Endothelial cell of umbilical vein (primary cell): ENCODE measurements at regions of chr5 and their contacts with region 1.

Region 1: DNA sequence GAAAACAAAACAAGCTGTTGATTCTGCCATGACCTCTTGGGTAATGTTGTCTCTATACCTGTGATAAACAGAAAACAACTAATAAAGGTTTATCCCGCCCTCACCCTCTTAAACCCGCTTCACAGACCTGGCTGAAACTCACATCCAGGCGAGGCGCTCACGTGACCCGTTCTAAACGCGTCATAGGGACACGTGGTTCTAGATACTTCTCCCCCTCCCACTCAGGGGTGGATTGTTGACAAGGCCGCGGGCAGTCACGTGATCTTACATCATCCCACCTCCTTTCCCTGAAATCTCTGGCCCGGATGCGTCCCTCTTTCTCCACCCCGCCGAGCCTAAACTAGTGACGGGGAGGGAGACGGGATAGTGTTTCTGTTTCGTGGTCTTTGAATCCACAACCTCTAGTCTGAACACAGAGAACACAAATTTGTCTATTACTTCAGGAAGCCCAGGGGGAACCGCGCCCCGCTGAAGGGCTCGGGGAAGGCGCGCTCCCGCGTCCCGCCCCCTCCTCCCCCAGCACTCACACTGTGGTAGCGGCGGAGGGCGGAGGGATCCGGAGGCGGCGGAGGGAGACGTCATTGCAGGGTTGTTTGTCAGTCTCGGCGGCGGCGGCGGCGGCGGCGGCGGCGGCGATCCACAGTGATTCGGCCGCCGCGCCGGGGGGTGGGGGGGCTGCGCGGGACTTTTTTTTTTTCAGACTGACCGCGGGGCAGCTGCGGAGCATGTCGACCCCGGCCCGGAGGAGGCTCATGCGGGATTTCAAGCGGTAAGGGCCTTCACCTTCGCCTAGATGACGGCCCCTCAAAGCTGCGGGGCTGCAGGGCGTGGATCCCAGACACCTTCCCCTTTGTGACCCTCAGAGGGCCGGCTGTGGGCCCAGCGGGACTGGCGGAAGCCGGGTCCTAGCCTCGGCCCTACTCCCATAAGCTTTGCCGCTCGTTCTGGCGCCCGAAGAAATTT is at the start of gene UBE2B:
- DNase-seq: peak; percentile 99
- H3K4me3 ChIP-seq: peak within 1 kb of the TSS; percentile 91 to 94 (median 93)
- H3K27ac ChIP-seq: peak within 1 kb of the TSS; percentile 97
- H3K4me1 ChIP-seq: peaks cover 11% of the 10 kb centered on the region
- H3K27me3 ChIP-seq: no peaks in the 10 kb centered on the region
- CTCF ChIP-seq: no peak
- POLR2A ChIP-seq: peak; percentile 90
- total RNA-seq, gene UBE2B: 109 and 110 TPM in 2 replicates

Region 2: DNA sequence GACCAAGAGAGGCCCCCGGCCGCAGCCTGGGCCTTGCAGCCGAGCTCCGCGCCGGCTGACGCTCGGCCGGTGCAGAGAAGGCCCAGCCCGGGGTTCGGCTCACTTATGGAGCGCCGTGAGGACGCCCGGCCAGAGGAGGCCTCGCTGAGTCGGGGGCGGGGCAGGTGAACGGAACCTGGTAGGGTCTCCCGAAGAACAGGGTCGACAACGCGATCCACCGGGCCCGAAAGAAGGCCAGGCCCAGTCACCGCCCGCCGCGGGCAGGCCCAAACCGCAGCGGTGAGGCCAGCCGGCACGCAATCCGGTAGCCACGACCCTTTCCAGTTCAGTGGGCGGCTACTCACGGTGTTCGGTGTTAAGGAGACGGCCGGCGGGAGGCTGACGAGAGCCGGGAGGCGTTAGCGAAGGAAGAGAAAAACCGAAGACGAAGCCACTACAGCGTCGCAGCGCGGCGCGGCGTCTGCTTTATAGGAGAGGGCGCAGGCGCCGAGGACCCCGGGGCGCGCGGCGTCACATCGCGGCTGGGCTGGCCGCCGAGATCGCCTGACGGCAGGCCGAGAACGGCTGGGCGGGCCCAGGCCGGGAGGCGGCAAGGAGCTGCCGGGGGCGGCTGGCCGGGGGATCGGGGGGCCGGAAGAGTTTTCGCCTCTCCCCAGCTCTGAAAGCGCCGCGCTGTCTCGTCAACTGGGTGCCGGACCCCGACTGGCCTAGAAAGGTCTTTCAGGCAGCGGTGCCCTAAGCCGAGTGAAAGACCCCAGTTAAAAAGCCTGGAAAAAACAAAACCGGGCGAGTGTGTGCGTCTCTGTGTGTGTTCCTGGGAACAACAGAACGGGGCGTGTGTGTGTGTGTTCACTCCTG is 194.4 kb before region 1 on chr5 and contains the start of gene SKP1:
- CTCF ChIA-PET with region 1: no interaction called
- POLR2A ChIA-PET with region 1: no interaction called
- dilution Hi-C with region 1: no loop called
- intact Hi-C with region 1: loop called (anchors 1 kb)
- DNase-seq: peak; percentile 86
- H3K4me3 ChIP-seq: peak within 1 kb of the TSS; percentile 91 to 99 (median 98)
- H3K27ac ChIP-seq: peak within 1 kb of the TSS; percentile 85
- H3K4me1 ChIP-seq: peaks cover 18% of the 10 kb centered on the region
- H3K27me3 ChIP-seq: no peaks in the 10 kb centered on the region
- CTCF ChIP-seq: no peak
- POLR2A ChIP-seq: peak; percentile 99
- total RNA-seq, gene SKP1: 311 and 320 TPM in 2 replicates

Region 3: DNA sequence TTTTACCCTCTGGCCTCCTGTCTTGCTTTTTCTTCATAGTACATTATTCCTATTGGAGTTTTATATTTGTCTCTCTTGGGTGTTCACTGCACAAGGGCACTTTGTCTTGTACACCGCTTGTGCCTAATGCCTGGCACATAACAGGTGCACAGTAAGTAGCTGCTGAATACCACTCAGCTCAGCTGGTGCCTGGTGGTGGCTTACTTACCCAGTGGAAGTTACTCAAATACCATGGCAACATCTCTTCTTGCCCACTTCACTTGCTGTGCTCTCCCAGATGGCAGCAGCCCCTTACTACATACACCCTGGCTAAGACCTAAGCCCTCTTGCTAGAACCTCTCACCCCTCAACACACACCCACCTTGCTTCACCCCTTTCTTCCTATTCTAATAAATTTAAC is 183.1 kb before region 1 on chr5:
- CTCF ChIA-PET with region 1: no interaction called
- POLR2A ChIA-PET with region 1: no interaction called
- dilution Hi-C with region 1: no loop called
- intact Hi-C with region 1: no loop called
- DNase-seq: no peak
- H3K4me3 ChIP-seq: no peak overlapping the region
- H3K27ac ChIP-seq: no peak overlapping the region
- H3K4me1 ChIP-seq: no peaks in the 10 kb centered on the region
- H3K27me3 ChIP-seq: no peaks in the 10 kb centered on the region
- CTCF ChIP-seq: no peak
- POLR2A ChIP-seq: no peak

Region 4: GRCh38 chr5:134304311-134304710 is 66.8 kb before region 1 on chr5:
- CTCF ChIA-PET with region 1: no interaction called
- POLR2A ChIA-PET with region 1: no interaction called
- dilution Hi-C with region 1: no loop called
- intact Hi-C with region 1: loop called (anchors 5 kb)
- DNase-seq: no peak
- H3K4me3 ChIP-seq: no peak overlapping the region
- H3K27ac ChIP-seq: no peak overlapping the region
- H3K4me1 ChIP-seq: no peaks in the 10 kb centered on the region
- H3K27me3 ChIP-seq: no peaks in the 10 kb centered on the region
- CTCF ChIP-seq: no peak
- POLR2A ChIP-seq: no peak

Region 5: DNA sequence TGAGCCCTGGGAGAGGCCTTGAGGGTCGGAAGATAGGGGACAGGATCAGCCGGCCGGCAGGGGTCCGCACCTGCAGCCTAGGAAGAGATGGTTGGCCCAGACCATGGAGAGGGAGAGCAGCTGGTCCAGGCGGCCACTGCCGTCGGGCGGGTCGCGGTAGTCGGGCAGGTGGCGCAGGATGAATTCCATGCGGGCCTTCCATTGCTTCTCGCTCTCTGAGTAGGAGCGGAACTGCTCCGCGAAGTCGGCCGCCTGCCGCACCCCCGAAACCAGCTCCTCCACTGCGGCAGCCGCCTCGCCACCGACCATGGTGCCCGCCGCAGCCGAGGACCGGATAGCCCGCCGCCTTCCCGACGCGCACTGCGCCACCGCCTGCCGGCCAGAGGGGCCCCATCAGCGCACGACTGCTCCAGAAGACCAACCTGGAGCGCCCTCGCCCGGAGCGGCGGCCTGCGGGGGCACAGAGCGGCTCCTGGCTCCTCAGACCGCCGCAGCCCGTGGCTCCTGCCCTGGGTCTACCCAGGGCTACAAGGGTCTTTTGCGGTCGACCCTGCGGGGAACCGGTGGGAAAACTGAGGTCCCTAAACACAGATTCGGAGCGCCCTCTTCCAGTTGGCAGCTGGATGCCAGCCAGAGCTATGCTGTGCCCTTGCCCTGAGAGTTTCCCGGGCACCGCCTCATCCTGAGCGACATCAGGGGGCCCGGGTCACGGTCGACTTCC is 40.6 kb after region 1 on chr5 and contains the start of gene CDKN2AIPNL:
- CTCF ChIA-PET with region 1: interaction called, 4 read pairs
- POLR2A ChIA-PET with region 1: no interaction called
- dilution Hi-C with region 1: no loop called
- intact Hi-C with region 1: loop called (anchors 1 kb)
- DNase-seq: peak; percentile 86
- H3K4me3 ChIP-seq: peak within 1 kb of the TSS; percentile 75 to 88 (median 84)
- H3K27ac ChIP-seq: peak within 1 kb of the TSS; percentile 40
- H3K4me1 ChIP-seq: peaks cover 15% of the 10 kb centered on the region
- H3K27me3 ChIP-seq: no peaks in the 10 kb centered on the region
- CTCF ChIP-seq: peak; percentile 71 to 86
- POLR2A ChIP-seq: peak; percentile 86
- total RNA-seq, gene CDKN2AIPNL: 35.1 and 36.5 TPM in 2 replicates

Region 6: DNA sequence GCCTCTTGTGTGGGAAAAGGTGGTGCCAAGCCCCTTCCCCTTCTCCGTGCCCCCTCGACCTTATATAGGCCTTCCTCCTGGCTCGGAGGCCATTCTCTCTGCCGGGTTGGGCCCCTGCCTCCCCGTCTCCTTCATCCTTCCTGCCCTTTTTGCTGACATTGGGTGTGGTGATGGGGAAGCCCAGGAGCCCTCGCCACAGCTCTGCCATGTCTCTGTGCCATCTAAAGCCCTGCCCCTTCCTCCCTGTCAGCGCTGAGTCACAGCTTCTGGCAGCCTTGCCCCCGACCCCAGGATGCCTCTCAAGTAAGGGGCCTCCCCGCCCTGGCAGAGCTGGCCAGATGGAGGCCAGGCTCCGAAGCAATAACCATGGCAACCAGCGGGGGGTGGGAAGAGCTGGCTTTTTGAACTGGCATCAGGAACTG is 184.7 kb after region 1 on chr5:
- CTCF ChIA-PET with region 1: no interaction called
- POLR2A ChIA-PET with region 1: no interaction called
- dilution Hi-C with region 1: no loop called
- intact Hi-C with region 1: loop called (anchors 1 kb)
- DNase-seq: peak; percentile 91
- H3K4me3 ChIP-seq: no peak overlapping the region
- H3K27ac ChIP-seq: peak overlapping the region; percentile 88
- H3K4me1 ChIP-seq: peaks cover 56% of the 10 kb centered on the region
- H3K27me3 ChIP-seq: no peaks in the 10 kb centered on the region
- CTCF ChIP-seq: no peak
- POLR2A ChIP-seq: no peak

Region 7: DNA sequence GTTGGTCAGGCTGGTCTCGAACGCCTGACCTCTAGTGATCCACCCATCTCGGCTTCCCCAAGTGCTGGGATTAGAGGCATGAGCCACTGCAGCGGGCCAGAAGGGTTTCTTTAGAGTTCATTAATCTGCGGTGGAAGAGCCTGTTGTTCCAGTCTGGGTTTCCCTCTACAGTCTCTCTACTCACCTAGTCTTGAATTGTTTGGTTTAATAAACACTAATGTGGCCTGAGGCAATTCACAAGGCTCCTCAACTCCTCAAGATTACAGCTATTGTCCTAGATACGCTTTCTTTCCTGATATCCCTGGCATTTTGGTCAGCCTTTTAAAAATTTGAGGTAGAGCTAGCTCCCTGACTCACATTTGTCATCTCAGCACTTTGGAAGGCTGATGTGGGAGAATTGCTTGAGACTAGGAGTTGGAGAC is 266.0 kb after region 1 on chr5:
- CTCF ChIA-PET with region 1: no interaction called
- POLR2A ChIA-PET with region 1: no interaction called
- dilution Hi-C with region 1: no loop called
- intact Hi-C with region 1: loop called (anchors 5 kb)
- DNase-seq: no peak
- H3K4me3 ChIP-seq: no peak overlapping the region
- H3K27ac ChIP-seq: no peak overlapping the region
- H3K4me1 ChIP-seq: no peaks in the 10 kb centered on the region
- H3K27me3 ChIP-seq: no peaks in the 10 kb centered on the region
- CTCF ChIP-seq: no peak
- POLR2A ChIP-seq: no peak